Aorta (tissue), 5 donors: ENCODE measurements at regions of chr3 and their contacts with region 1.

Region 1: DNA sequence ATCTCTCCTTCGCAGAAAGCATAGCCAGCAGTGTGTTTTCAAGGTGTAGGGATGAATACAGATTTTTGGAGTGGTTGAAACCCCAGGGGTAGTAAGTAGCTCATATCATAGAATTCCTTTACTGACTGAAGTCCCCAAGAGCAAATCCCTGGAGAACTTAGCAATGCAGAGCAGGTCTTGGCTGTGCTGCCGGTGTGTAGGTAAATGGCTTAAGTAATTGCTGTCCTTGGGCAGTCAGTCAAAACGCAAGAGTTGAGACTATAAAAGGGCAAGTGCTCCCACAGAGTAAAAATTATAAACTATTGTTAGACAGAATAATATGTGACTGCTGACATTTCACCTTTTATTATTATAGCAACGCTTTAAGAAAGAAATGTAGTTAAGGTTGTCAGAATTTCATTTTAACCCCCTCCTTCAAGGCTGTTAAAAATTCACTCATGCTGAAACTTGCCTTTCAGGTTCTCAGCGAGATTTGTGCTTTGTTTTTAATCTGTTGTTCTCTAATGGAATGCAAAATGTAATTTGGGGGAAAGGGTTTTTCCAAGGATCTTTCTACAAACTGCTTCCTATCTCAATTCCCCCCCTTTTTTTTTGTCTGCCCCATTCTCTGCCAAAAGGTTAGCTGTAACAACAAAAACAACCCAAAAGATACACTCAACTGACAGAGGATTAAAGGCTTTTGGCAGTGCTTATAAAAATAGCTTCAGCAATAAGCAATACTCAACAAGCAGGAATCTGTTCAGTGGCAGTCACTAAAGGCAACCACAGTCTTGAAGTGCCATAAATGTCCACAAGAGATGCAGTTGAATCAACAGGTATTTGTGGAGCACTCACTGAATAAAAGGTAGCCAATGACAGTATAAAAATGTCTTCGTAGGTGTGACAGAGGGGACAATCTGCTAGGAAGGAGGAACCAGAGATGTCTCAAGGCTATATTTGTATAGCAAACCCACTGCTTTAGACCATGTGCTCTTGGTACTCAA is 105.3 kb downstream of the THRB start:
- DNase-seq: no peak
- ATAC-seq: peak; percentile 39
- H3K4me3 ChIP-seq: no peak overlapping the region
- H3K27ac ChIP-seq: peak overlapping the region; percentile 92 to 95
- H3K4me1 ChIP-seq: peaks cover 12 to 29% of the 10 kb centered on the region in 2 donors
- H3K27me3 ChIP-seq: no peaks in the 10 kb centered on the region

Region 2: DNA sequence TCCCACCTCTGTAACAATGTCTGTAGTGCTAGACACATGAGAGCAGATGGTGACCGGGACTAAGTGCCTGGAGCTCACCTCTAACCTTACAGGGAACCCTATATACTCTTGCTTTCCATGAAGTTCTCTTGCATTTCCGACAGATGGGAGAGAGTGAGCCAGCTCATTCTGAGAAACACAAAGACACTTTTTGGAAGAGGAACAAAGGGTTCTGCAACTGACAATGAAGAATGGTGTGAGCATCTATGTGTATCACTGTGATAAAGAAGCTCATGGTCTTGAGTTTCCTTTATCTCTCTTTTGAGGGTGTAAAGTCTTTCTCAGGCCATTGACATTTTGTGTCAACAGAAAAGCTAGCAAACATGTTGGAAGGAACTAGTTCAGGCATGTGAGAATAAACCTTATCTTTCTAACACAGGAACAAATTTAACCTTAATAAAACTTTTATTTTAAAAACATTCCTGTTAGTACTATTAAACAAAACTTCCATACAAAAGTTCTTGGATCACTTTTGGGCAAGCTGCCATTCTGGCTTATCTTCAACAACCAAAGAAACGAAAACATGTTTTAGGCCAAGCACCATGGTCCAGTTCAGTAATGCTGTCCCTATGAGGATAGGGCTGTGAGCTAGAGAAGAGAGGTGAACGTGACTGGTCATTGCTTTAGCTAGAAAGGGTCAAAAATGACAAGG is 37.5 kb before region 1 on chr3:
- intact Hi-C with region 1: loop called in 1 of 2 experiments (anchors 5 kb)
- DNase-seq: peak in 1 of 2 donors; percentile 52
- ATAC-seq: peak; percentile 90
- H3K4me3 ChIP-seq: no peak overlapping the region
- H3K27ac ChIP-seq: peak overlapping the region; percentile 90 to 94
- H3K4me1 ChIP-seq: peaks cover 11 to 13% of the 10 kb centered on the region in 2 donors
- H3K27me3 ChIP-seq: no peaks in the 10 kb centered on the region

Region 3: GRCh38 chr3:24428481-24428880 is 39.1 kb after region 1 on chr3:
- intact Hi-C with region 1: no loop called
- DNase-seq: no peak
- ATAC-seq: no peak
- H3K4me3 ChIP-seq: no peak overlapping the region
- H3K27ac ChIP-seq: no peak overlapping the region
- H3K4me1 ChIP-seq: peaks cover 0 to 9% of the 10 kb centered on the region in 2 donors
- H3K27me3 ChIP-seq: no peaks in the 10 kb centered on the region

Region 4: DNA sequence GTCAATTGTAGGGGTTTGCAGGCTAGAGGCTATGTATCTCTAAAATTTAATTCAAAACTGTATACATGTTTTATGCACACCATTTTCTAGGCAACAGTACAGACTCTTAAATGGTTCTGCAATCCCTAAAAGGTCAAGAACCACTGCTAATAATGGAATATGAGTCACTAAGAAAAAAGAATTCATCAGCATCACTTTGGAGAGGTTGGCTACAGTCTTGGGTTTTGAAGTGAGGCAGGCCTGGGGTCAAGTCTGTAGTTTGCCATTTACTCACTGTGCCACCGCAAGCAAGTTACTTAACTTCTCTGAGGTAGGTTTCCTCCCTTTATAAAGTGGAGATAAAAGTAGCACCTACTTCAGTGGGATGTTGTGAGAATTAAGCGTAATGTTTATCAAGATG is 71.6 kb after region 1 on chr3:
- intact Hi-C with region 1: loop called in 1 of 2 experiments (anchors 5 kb)
- DNase-seq: no peak
- ATAC-seq: peak; percentile 73
- H3K4me3 ChIP-seq: no peak overlapping the region
- H3K27ac ChIP-seq: no peak overlapping the region
- H3K4me1 ChIP-seq: peaks cover 2 to 3% of the 10 kb centered on the region in 2 donors
- H3K27me3 ChIP-seq: no peaks in the 10 kb centered on the region

Region 5: DNA sequence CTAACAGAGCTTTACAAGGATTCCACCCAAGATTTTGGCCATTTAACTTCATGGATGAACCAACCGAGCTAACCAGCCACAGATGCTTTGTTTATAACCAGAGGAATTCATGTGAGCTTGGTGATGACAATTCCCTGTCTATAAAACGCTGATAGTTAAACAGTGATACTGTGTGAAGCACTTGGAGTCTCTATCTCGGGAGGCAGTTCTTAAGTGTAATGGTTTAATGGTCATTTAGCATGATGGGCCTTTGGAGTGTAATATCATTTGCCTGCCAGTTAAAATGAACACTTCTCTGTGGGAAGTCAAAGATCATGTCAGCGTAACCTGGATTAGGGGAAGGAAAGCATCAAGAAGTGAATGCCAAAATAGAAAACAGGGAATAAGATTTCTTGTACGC is 473.8 kb after region 1 on chr3:
- intact Hi-C with region 1: no loop called
- DNase-seq: no peak
- ATAC-seq: no peak
- H3K4me3 ChIP-seq: no peak overlapping the region
- H3K27ac ChIP-seq: no peak overlapping the region
- H3K4me1 ChIP-seq: no peaks in the 10 kb centered on the region
- H3K27me3 ChIP-seq: no peaks in the 10 kb centered on the region